B cell (primary cell): ENCODE measurements at regions of chr1 and their contacts with region 1.

Region 1: DNA sequence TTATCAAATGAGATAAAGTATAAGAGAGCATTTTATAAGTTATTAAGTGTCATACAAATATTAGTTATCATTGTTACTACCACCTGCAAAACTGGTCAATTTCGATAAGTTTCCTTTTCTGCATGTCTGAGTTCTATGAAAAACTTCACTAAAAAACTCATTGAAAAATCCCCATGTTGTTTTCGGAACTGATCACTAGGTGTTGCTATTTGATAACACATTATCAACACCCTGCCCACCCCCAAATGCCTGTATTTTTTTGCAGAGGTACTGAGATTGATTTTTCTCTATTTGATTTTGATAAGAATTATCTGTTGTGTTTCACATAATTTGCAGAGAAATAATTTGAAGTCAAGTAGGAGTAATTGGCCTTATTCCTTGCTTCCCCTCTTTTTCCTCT is 22.1 kb upstream of the DISP1 start:
- DNase-seq: peak; percentile 54
- ATAC-seq: peak; percentile 54
- H3K4me3 ChIP-seq: no peak overlapping the region
- H3K4me3 Mint-ChIP-seq: no peak overlapping the region
- H3K27ac ChIP-seq: no peak overlapping the region
- H3K27ac Mint-ChIP-seq: peak overlapping the region; percentile 47
- H3K4me1 ChIP-seq: peaks cover 16 to 21% of the 10 kb centered on the region in 2 donors
- H3K4me1 Mint-ChIP-seq: peaks cover 40% of the 10 kb centered on the region
- H3K27me3 ChIP-seq: no peaks in the 10 kb centered on the region
- H3K27me3 Mint-ChIP-seq: no peaks in the 10 kb centered on the region
- CTCF ChIP-seq: peak; percentile 69

Region 2: DNA sequence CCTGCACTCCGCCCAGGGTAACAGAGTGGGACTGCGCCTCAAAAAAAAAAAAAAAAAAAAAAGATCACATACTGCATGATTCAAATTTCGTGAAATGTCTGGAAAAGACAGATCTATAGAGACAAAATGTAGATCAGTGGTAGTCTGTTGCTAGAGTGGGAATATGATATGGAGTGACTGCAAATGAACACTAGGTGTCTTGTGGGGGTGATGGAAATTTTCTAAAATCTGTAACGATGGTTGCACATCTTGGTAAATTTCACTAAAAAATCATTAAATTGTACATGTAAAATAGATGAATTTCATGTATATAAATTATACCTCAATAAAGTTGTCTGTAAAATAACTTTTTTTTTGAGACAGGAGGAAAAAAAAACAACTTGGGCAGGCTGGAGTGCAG is 85.9 kb before region 1 on chr1:
- CTCF ChIA-PET with region 1: no interaction called
- POLR2A ChIA-PET with region 1: no interaction called
- intact Hi-C with region 1: no loop called
- DNase-seq: no peak
- ATAC-seq: no peak
- H3K4me3 ChIP-seq: no peak overlapping the region
- H3K4me3 Mint-ChIP-seq: no peak overlapping the region
- H3K27ac ChIP-seq: no peak overlapping the region
- H3K27ac Mint-ChIP-seq: no peak overlapping the region
- H3K4me1 ChIP-seq: peaks cover 26 to 39% of the 10 kb centered on the region in 2 donors
- H3K4me1 Mint-ChIP-seq: peaks cover 67% of the 10 kb centered on the region
- H3K27me3 ChIP-seq: no peaks in the 10 kb centered on the region
- H3K27me3 Mint-ChIP-seq: no peaks in the 10 kb centered on the region
- CTCF ChIP-seq: peak; percentile 47

Region 3: DNA sequence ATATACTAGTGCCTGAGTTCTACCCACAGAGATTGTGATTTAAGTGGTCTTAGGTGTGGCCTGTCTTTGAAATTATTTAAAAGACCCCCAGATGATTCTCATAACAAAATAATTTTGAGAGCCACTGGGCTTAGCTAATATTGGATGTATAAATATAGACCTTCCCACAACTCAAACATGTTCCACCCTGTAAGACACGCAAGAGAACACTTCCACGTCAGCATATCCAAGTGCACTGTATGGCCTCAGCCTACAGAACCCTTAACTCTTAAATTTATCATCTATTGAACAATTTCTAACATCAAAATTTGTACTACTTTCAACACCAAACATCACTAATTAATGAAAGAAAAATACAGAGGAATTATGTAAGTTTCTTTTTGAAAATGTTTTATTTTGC is 53.3 kb before region 1 on chr1:
- CTCF ChIA-PET with region 1: interaction called, 8 read pairs
- POLR2A ChIA-PET with region 1: no interaction called
- intact Hi-C with region 1: loop called (anchors 2 kb)
- DNase-seq: no peak
- ATAC-seq: no peak
- H3K4me3 ChIP-seq: peak overlapping the region; percentile 17 to 53 (median 33)
- H3K4me3 Mint-ChIP-seq: no peak overlapping the region
- H3K27ac ChIP-seq: peak overlapping the region; percentile 50 to 77
- H3K27ac Mint-ChIP-seq: no peak overlapping the region
- H3K4me1 ChIP-seq: peaks cover 58 to 61% of the 10 kb centered on the region in 2 donors
- H3K4me1 Mint-ChIP-seq: peaks cover 44% of the 10 kb centered on the region
- H3K27me3 ChIP-seq: no peaks in the 10 kb centered on the region
- H3K27me3 Mint-ChIP-seq: no peaks in the 10 kb centered on the region
- CTCF ChIP-seq: no peak

Region 4: DNA sequence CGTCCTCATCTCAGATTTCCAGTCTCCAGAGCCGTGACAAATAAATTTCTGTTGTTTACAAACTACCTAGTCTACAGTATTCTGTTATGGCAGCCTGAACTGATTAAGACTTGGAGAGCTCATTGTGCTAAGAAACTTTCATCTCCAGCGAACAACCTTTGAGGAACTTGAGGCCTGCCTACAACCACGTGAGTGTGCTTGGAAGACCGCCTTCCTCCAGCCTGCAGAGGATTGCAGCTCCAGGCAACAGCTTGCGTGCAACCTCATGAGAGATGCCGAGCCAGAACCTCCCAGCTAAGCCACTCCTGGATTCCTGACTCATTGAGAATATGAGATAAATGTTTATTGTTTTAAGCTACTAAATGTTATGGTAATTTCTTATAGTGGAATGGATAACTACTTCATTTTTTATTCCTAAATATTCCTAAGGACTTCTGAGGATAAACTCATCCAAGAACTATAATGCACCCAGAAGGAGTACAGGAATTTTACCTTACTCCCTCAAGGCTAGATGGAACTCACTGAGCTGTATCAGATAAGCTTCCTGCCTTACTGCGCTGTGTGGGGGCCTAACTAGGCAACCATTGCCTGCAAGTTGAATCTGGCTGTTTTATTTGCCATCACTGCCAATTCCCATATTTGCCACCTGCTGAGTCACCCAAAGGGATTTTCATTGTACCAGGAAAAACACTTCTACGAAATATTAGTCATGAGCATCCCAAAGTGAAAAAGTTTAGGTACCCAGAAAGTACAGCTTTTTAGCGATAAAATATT is 38.2 kb before region 1 on chr1:
- CTCF ChIA-PET with region 1: interaction called, 14 read pairs
- POLR2A ChIA-PET with region 1: no interaction called
- intact Hi-C with region 1: loop called (anchors 5 kb)
- DNase-seq: no peak
- ATAC-seq: no peak
- H3K4me3 ChIP-seq: no peak overlapping the region
- H3K4me3 Mint-ChIP-seq: peak overlapping the region; percentile 58
- H3K27ac ChIP-seq: no peak overlapping the region
- H3K27ac Mint-ChIP-seq: peak overlapping the region; percentile 79
- H3K4me1 ChIP-seq: peaks cover 56 to 57% of the 10 kb centered on the region in 2 donors
- H3K4me1 Mint-ChIP-seq: peaks cover 58% of the 10 kb centered on the region
- H3K27me3 ChIP-seq: no peaks in the 10 kb centered on the region
- H3K27me3 Mint-ChIP-seq: no peaks in the 10 kb centered on the region
- CTCF ChIP-seq: no peak

Region 5: GRCh38 chr1:222829868-222830267 is 37.1 kb after region 1 on chr1:
- CTCF ChIA-PET with region 1: no interaction called
- POLR2A ChIA-PET with region 1: no interaction called
- intact Hi-C with region 1: loop called (anchors 5 kb)
- DNase-seq: no peak
- ATAC-seq: no peak
- H3K4me3 ChIP-seq: no peak overlapping the region
- H3K4me3 Mint-ChIP-seq: no peak overlapping the region
- H3K27ac ChIP-seq: no peak overlapping the region
- H3K27ac Mint-ChIP-seq: no peak overlapping the region
- H3K4me1 ChIP-seq: no peaks in the 10 kb centered on the region
- H3K4me1 Mint-ChIP-seq: peaks cover 23% of the 10 kb centered on the region
- H3K27me3 ChIP-seq: no peaks in the 10 kb centered on the region
- H3K27me3 Mint-ChIP-seq: no peaks in the 10 kb centered on the region
- CTCF ChIP-seq: no peak

Region 6: GRCh38 chr1:223700942-223701637 is 908.3 kb after region 1 on chr1:
- CTCF ChIA-PET with region 1: no interaction called
- POLR2A ChIA-PET with region 1: no interaction called
- intact Hi-C with region 1: loop called (anchors 1 kb)
- DNase-seq: no peak
- ATAC-seq: no peak
- H3K4me3 ChIP-seq: no peak overlapping the region
- H3K4me3 Mint-ChIP-seq: no peak overlapping the region
- H3K27ac ChIP-seq: no peak overlapping the region
- H3K27ac Mint-ChIP-seq: no peak overlapping the region
- H3K4me1 ChIP-seq: peaks cover 4 to 8% of the 10 kb centered on the region in 2 donors
- H3K4me1 Mint-ChIP-seq: peaks cover 8% of the 10 kb centered on the region
- H3K27me3 ChIP-seq: peaks cover 0 to 10% (median 0%) of the 10 kb centered on the region in 4 experiments
- H3K27me3 Mint-ChIP-seq: peaks cover 24% of the 10 kb centered on the region
- CTCF ChIP-seq: no peak